ENCODE measurements at regions of chr6 and their contacts with region 1.

Region 1: DNA sequence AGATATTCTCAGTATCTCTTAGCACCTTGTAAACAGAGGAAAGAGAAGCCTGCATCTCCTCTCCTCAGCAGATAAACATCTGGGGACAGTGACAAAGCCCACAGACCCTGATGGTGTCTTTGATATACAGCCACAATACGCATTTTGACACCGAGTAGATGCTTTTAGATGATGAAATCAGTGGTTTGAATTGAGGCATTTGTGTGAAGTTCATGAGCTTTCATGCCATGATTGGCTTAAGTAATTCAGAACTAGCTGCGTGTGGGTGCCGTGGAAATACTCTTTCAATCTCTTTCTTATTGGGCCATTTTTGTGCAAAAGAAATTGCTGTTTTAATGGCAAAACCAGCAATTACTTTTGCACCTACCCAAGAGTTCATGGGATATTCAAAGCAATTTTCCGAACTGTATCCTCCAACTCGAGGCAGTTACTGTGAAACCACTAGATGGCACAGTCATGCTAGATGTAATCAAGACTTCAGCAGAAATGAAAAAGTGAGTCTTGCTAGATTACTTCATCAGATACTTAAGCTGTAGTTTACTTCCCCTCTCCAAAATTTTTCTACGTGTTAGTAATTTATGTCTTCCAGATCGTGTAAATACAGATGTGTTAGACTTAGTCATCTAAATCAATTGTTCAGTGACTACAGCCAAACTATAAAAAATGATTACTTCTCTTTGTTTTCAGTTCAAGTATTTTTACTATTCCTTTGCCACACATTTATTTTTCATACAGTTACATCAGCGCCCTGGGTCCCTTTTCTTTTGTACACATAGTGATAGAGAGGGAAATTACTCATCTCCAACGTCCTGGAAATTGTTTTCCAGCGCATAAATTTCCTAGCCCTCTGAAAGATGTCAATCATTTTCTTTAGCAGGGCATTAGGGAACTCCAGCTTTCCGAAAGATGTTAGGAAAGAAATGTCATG is 49.4 kb downstream of the IYD start:
- DNase-seq: peak; percentile 81
- H3K4me3 ChIP-seq: peak overlapping the region; percentile 21
- CTCF ChIP-seq: peak; percentile 82

Region 2: GRCh38 chr6:150452428-150453243 is 34.5 kb after region 1 on chr6:
- in situ Hi-C with region 1: no loop called
- DNase-seq: peak; percentile 66
- H3K4me3 ChIP-seq: no peak overlapping the region
- CTCF ChIP-seq: no peak

Region 3: GRCh38 chr6:150813319-150813992 is 395.3 kb after region 1 on chr6:
- in situ Hi-C with region 1: loop called (anchors 5 kb)
- DNase-seq: no peak
- H3K4me3 ChIP-seq: no peak overlapping the region
- CTCF ChIP-seq: no peak

Measured in astrocyte of the cerebellum (primary cell).